ENCODE measurements at regions of chr5 and their contacts with region 1.

Region 1: DNA sequence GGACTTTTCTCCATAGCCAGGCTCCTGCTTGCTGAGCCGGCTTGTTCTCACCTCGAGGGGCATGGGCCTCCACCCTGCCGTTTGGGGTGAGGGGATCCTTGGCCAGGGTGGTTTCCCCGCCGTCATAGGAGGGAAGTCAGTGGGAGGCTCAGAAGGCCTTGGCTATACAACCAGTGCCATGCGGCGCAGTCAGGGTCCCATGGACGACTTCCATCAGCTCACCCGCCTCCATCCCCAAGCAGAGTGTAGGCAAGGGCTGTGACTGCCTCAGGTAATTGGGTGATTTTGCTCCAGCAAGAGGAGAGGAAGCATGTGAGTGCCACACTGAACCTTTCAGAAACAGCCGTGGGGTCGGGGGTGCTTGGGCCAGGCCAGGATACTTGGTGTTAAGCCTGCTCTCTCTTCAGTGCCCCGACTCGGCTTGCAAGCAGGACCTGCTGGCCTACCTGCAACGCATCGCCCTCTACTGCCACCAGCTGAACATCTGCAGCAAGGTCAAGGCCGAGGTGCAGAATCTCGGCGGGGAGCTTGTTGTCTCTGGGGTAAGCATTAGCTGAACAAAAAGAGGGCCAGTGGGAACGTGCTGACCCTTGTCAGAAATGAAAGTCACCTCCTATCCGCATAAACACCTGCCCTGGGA is 57.2 kb upstream of the LRRTM2 start:
- DNase-seq: peak; percentile 71
- ATAC-seq: peak; percentile 81
- H3K4me3 Mint-ChIP-seq: no peak overlapping the region
- H3K27ac Mint-ChIP-seq: peak overlapping the region; percentile 6; the same call in 1 of the 2 replicates
- H3K4me1 Mint-ChIP-seq: peaks cover 31% of the 10 kb centered on the region
- H3K27me3 Mint-ChIP-seq: no peaks in the 10 kb centered on the region
- CTCF ChIP-seq: no peak

Region 2: DNA sequence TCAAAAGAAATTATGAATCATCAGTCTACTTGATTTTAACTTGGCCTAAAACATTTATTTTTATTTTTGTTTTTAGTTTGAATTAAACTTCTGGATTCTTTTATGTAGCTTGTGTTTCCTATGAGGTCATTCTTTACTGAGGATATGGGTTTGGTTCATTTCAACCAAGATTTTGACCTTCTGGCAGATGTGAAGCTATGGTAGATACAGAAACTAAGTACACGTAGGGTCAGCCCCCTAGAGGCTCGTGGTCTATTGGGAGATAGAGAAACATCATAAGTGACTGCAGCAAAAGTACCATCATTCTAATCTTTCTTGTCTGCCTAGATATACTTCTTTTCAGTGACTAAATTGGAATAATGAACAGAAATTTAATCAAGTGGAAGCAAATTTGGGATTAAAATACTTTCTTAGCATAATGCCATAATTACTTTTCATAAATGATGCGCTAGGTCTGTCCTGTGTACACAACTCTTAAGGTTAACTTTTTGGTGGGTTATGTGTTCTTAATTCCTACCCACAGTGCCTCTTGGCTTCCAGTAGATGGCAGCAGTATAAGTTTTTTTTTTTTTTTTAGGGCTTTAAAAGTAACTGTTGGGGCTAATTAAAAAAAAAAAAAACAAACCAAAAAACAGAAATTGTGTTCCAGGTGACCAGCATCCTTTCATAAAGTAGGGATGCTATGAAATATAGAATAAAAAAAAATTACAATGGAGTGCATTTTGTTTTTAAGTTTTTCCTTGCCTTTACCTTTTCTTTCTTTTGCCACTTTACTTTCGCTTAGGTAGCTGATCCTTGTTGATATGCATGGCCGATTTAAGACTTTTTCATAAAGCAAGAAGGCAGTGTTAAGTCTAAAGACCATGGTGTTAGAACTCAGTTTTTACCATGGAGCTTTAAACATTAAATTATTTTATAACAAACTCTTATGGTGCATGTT is 107.1 kb before region 1 on chr5:
- CTCF ChIA-PET with region 1: interaction called, 16 read pairs
- POLR2A ChIA-PET with region 1: no interaction called
- DNase-seq: no peak
- ATAC-seq: peak; percentile 63
- H3K4me3 Mint-ChIP-seq: no peak overlapping the region
- H3K27ac Mint-ChIP-seq: no peak overlapping the region; the same call in 1 of the 2 replicates
- H3K4me1 Mint-ChIP-seq: peaks cover 28% of the 10 kb centered on the region
- H3K27me3 Mint-ChIP-seq: no peaks in the 10 kb centered on the region
- CTCF ChIP-seq: no peak; the same call in 1 of the 2 replicates

Region 3: GRCh38 chr5:138833080-138833479 is 99.2 kb before region 1 on chr5:
- CTCF ChIA-PET with region 1: interaction called, 12 read pairs
- POLR2A ChIA-PET with region 1: no interaction called
- DNase-seq: no peak
- ATAC-seq: peak; percentile 63
- H3K4me3 Mint-ChIP-seq: peak overlapping the region; percentile 11
- H3K27ac Mint-ChIP-seq: peak overlapping the region; percentile 95
- H3K4me1 Mint-ChIP-seq: peaks cover 89% of the 10 kb centered on the region
- H3K27me3 Mint-ChIP-seq: no peaks in the 10 kb centered on the region
- CTCF ChIP-seq: no peak

Region 4: GRCh38 chr5:138953387-138954256 is 21.3 kb after region 1 on chr5:
- CTCF ChIA-PET with region 1: no interaction called
- POLR2A ChIA-PET with region 1: no interaction called
- DNase-seq: no peak
- ATAC-seq: no peak
- H3K4me3 Mint-ChIP-seq: no peak overlapping the region
- H3K27ac Mint-ChIP-seq: no peak overlapping the region
- H3K4me1 Mint-ChIP-seq: peaks cover 24% of the 10 kb centered on the region
- H3K27me3 Mint-ChIP-seq: no peaks in the 10 kb centered on the region
- CTCF ChIP-seq: no peak